Motor neuron (in vitro differentiated cells): ENCODE measurements at regions of chr2 and their contacts with region 1.

Region 1: GRCh38 chr2:179595284-179595683 is 266.1 kb downstream of the ZNF385B start:
- ATAC-seq: peak in 2 of 8 experiments; percentile 34 to 55
- H3K4me3 ChIP-seq: no peak overlapping the region
- H3K27ac ChIP-seq: no peak overlapping the region
- H3K4me1 ChIP-seq: no peaks in the 10 kb centered on the region

Region 2: GRCh38 chr2:179340668-179341067 is 254.6 kb before region 1 on chr2:
- in situ Hi-C with region 1: no loop called
- ATAC-seq: no peak
- H3K4me3 ChIP-seq: no peak overlapping the region
- H3K27ac ChIP-seq: no peak overlapping the region
- H3K4me1 ChIP-seq: peaks cover 0 to 3% of the 10 kb centered on the region in 2 donors

Region 3: DNA sequence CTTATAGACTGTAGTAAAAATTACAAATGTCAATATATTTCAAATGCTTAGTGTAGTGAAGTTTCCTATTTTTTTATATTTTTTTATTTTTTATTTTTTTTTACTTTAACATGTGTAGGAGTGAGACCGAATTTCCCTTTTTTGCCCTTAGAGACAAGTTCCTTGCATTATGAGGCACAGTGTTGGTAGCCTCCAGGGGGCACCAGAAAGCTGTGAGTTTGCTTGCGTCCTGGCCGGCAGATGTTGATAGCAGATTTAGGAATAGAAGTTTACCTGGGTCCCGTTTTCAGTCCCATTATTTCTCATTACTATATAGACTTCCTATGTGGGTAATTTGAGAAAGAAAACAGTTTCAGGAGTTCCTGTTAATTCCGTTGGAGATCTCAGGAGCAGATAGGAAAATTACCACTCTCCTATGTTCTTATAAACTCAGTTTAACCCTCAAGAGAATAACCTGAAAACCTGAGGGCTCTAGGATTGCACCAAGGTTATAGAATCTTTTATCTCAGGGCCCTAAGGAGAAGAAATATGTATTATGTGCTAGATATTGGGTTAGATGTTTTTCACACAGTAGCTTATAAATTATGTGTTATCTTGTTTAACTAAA is 173.1 kb before region 1 on chr2:
- in situ Hi-C with region 1: loop called in 1 of 9 experiments (anchors 10 kb)
- ATAC-seq: peak; percentile 50 to 88 (median 71)
- H3K4me3 ChIP-seq: no peak overlapping the region
- H3K27ac ChIP-seq: no peak overlapping the region
- H3K4me1 ChIP-seq: peaks cover 0 to 10% of the 10 kb centered on the region in 2 donors